ENCODE measurements at regions of chr9 and their contacts with region 1.

Region 1: DNA sequence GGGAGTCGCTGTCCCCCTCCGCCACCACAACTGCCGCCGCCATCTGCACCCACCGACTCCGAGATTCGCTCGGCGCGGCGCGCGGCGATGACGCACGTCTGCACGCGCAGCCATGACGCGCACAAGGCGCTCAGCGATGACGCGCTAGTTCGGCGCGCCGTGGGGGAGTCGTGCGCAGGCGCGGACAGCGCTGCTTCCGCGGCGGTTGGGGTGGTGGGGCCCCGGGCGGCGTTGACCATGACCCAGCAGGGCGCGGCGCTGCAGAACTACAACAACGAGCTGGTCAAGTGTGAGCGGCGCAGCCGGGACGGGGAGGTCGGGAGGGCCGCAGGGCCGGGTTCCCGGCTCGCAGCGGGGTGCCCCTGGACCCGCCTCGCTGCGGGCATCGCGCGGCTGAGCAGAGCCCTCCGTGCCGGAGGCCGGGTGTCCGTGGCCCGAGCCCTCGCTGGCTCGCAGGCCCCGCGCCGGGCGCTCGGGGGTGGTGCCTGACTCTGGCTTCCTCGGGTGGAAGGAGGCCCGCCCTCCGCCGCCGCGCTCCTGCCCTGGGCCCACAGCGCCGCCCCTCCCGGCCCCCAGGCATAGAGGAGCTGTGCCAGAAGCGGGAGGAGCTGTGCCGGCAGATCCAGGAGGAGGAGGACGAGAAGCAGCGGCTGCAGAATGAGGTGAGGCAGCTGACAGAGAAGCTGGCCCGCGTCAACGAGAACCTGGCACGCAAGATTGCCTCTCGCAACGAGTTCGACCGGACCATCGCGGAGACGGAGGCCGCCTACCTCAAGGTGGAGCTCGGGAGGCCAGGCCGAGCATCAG is at the starts of genes ANAPC2 and SSNA1:
- DNase-seq: peak; percentile 36
- H3K4me3 ChIP-seq: peak within 1 kb of the TSS; percentile 96
- CTCF ChIP-seq: peak; percentile 62

Region 2: GRCh38 chr9:137129456-137130175 is 59.1 kb before region 1 on chr9:
- CTCF ChIA-PET with region 1: no interaction called
- POLR2A ChIA-PET with region 1: interaction called, 10 read pairs
- DNase-seq: peak; percentile 49
- H3K4me3 ChIP-seq: peak overlapping the region; percentile 81
- CTCF ChIP-seq: no peak

Region 3: GRCh38 chr9:137164370-137165249 is 24.1 kb before region 1 on chr9:
- CTCF ChIA-PET with region 1: no interaction called
- POLR2A ChIA-PET with region 1: no interaction called
- DNase-seq: no peak
- H3K4me3 ChIP-seq: no peak overlapping the region
- CTCF ChIP-seq: no peak

Region 4: DNA sequence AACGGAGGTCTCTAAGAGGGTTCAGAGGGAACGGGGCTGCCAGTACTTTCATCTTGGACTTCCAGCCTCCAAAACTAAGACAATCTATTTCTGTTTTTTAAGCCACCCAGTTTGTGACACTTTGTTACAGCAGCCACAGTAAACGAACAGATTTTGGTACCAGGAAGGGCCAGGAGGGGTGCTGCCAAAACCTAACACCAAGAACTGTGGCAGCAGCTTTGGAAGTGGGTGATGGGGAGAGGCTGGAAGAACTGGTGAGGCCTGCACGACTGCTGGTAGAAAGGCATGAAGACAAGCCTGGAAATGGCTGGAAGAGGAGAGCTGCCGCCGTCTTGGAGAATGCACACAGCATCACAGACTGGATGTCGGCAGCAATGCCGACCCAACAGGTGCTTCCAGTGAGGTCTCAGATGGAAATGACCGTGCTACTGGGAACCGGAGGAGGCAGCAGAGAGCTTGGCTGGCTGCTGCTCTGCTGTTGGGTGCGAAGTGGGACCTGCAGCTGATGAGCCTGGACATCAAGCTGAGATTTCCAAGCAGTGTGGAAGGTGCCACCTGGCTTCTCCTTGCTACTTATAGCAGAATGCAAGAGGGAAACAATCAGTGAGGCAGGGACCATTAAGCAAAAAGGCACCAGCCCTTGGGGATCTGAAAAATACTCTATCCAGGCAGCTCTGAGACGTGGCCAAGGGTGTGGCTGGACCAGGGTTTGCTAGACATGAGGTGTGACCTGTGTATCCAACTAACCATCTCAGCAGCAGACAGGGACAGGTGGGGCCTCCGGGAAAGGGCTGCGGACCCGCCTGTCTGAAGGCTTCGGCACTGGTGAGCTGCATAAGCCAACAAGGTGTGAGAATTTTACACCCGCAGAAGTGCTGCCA is 12.2 kb before region 1 on chr9:
- CTCF ChIA-PET with region 1: interaction called, 30 read pairs
- POLR2A ChIA-PET with region 1: interaction called, 3 read pairs
- DNase-seq: no peak
- H3K4me3 ChIP-seq: no peak overlapping the region
- CTCF ChIP-seq: peak; percentile 54

Region 5: GRCh38 chr9:137200311-137201204 is 11.9 kb after region 1 on chr9 and contains the start of gene TPRN:
- CTCF ChIA-PET with region 1: interaction called, 15 read pairs
- POLR2A ChIA-PET with region 1: interaction called, 12 read pairs
- DNase-seq: peak; percentile 89
- H3K4me3 ChIP-seq: peak within 1 kb of the TSS; percentile 79
- CTCF ChIP-seq: no peak

Region 6: DNA sequence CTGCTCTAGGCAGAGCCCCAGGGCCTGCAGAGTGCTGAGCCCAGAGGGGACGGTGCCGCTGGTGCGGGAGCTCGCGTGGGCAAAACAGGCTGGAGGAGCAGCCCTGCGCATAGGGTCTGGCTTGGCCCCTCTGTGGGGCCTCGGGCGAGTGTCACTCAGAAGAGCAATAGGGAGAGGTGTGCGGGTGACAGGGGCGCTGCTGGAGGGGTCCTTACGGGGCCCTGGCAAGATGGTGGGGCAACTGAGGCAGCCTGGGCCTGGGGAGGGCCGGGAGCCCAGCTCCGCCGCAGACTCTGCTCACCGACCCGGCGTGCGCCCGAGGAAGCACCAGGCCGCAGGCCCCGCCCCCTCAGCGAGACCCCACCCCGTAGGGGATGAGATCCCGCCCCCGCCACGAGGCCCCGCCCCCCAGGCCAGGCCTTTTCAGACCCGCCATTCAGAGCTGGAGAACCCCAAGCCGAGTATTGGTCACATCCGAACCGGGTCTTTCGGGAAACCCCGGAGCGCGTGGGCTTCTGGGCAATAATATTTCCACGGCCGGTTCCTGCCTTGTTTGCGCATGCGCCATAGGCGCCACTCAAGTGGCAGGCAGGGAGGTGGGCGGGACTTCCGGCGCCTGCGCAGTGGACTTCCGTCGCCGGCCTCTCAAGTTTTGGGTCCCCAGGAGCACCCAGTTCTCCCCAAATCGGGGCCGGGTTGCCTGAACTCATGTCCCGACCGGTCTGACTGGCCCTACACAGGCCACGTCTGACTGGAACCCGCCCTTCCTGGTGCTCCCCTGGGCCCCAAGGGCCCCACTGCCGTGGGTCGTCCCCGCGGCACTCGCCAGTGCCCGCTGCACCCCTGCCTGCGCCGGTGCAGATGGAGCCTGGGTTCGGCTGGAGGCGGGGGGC is 34.6 kb after region 1 on chr9:
- CTCF ChIA-PET with region 1: interaction called, 13 read pairs
- POLR2A ChIA-PET with region 1: interaction called, 5 read pairs
- DNase-seq: peak; percentile 80
- H3K4me3 ChIP-seq: peak overlapping the region; percentile 87
- CTCF ChIP-seq: no peak